Dendritic cell treated with granulocyte-macrophage colony-stimulating factor and Interleukin-4, amounts not matched to agents 40 ng/mL and 50 ng/mL, for 4 days (primary cell): ENCODE measurements at regions of chr3 and their contacts with region 1.

Region 1: GRCh38 chr3:159260049-159260662 is 458.3 kb downstream of the MFSD1 start:
- H3K4me3 Mint-ChIP-seq: no peak overlapping the region
- H3K27ac Mint-ChIP-seq: no peak overlapping the region
- H3K4me1 Mint-ChIP-seq: no peaks in the 10 kb centered on the region
- H3K27me3 Mint-ChIP-seq: peaks cover 3% of the 10 kb centered on the region

Region 2: DNA sequence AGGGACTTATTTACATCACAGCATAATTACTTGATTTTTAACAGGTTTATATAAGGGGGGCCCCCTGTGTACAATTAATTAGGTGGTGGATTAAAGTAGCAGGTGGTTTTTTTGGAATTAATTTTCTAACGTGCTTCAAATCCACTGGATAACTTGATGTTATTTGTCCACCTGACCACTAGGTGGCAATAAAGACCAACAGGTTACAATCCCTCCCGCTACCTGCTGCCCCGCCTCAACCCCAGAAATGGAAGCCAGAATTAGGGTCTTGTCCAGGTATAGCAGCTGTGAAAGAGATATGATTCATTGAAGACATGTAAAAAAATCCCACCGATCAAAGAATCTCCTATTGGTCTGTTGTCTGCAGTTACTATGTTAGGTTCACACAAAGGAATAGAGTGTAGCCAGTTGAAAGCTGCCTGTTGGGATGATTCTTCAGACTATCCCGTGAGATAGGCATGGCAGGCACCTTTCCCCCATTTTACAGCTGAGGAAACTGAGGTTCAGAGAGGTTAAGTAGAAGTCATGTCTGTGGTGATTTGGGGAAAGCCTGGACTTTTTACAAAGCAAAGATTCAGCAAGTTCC is 414.3 kb before region 1 on chr3:
- intact Hi-C with region 1: loop called (anchors 5 kb)
- H3K4me3 Mint-ChIP-seq: no peak overlapping the region
- H3K27ac Mint-ChIP-seq: no peak overlapping the region
- H3K4me1 Mint-ChIP-seq: no peaks in the 10 kb centered on the region
- H3K27me3 Mint-ChIP-seq: peaks cover 4% of the 10 kb centered on the region

Region 3: DNA sequence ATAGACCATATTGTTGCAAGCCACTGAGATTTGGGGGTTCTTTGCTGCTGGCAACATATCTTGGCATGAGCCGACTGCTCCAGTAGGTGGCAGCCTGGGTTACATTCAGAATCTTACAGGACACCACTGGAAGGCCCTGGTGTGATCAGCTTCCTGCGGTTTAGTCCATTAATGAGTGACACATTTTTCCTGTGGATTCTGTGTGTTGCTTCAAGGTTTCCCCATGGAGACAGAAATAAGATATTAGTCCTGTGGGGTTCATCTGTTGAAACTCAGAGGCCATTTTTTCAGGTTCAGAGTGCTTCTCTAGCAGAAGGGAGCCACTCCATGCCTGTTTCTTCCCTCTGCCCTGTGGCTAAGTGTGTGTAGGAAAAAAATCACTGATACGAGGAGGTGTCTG is 342.1 kb before region 1 on chr3:
- intact Hi-C with region 1: loop called (anchors 1 kb)
- H3K4me3 Mint-ChIP-seq: no peak overlapping the region
- H3K27ac Mint-ChIP-seq: no peak overlapping the region
- H3K4me1 Mint-ChIP-seq: no peaks in the 10 kb centered on the region
- H3K27me3 Mint-ChIP-seq: no peaks in the 10 kb centered on the region